ENCODE measurements at regions of chr11 and their contacts with region 1.

Region 1: DNA sequence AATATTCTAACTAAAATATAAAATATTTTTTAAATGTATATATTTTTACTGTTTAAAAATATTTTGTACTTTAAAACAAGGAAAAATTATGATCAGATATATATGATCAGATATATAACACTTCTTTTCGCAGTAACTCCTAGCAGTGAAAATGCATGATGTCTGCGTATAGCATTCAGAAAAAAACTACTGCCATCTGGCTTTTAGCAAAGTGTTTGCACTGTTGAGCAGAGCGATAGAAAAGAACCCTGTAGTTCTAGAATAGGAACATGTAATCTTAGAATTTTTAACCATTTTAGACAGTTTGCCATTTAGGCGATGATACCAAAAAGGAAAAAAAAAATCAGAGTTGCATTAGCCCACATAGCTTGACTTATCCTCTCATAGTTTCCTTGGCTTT is 370.4 kb upstream of the ANO3 start:
- DNase-seq: no peak
- ATAC-seq: no peak
- H3K4me3 ChIP-seq: no peak overlapping the region
- H3K27ac ChIP-seq: no peak overlapping the region
- H3K4me1 ChIP-seq: peaks cover 0 to 5% of the 10 kb centered on the region in 2 donors
- H3K27me3 ChIP-seq: no peaks in the 10 kb centered on the region
- CTCF ChIP-seq: peak in 2 of 5 experiments; percentile 22 to 44
- POLR2A ChIP-seq: no peak

Region 2: DNA sequence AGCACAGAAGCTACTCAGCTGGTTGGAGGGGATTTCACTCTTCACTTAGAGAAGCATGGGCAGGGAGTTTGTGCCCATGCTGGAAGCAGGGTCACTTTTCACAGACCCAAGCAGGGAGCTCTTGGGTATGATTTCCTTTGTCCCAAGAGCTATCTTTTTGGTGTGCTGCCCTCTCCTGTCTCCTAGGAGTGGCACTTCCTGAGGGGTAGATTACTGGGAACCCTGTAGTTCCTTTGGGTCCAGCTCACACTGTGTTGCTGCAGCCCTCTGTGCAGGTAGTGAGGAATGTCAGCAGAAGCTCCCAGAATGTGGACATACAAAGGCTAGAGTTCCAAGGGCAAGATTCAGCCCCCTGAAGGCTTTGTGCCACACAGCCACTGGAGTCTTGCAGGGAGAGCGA is 166.7 kb before region 1 on chr11:
- in situ Hi-C with region 1: no loop called
- intact Hi-C with region 1: loop called (anchors 5 kb)
- DNase-seq: no peak
- ATAC-seq: no peak
- H3K4me3 ChIP-seq: no peak overlapping the region
- H3K27ac ChIP-seq: no peak overlapping the region
- H3K4me1 ChIP-seq: no peaks in the 10 kb centered on the region
- H3K27me3 ChIP-seq: no peaks in the 10 kb centered on the region
- CTCF ChIP-seq: no peak
- POLR2A ChIP-seq: no peak